Caco-2 (cell line): ENCODE measurements at regions of chr5 and their contacts with region 1.

Region 1: GRCh38 chr5:106940986-106941385 is 729.8 kb downstream of the EFNA5 start:
- DNase-seq: peak; percentile 69 to 77
- H3K4me3 ChIP-seq: no peak overlapping the region
- H3K4me3 Mint-ChIP-seq: peak overlapping the region; percentile 41
- H3K27ac Mint-ChIP-seq: peak overlapping the region; percentile 94
- H3K4me1 ChIP-seq: peaks cover 21% of the 10 kb centered on the region
- H3K4me1 Mint-ChIP-seq: peaks cover 18% of the 10 kb centered on the region
- H3K27me3 ChIP-seq: no peaks in the 10 kb centered on the region
- H3K27me3 Mint-ChIP-seq: no peaks in the 10 kb centered on the region
- CTCF ChIP-seq: no peak

Region 2: GRCh38 chr5:107002115-107002514 is 61.1 kb after region 1 on chr5:
- CTCF ChIA-PET with region 1: no interaction called
- POLR2A ChIA-PET with region 1: no interaction called
- intact Hi-C with region 1: no loop called
- DNase-seq: no peak
- H3K4me3 ChIP-seq: no peak overlapping the region
- H3K4me3 Mint-ChIP-seq: no peak overlapping the region
- H3K27ac Mint-ChIP-seq: no peak overlapping the region
- H3K4me1 ChIP-seq: no peaks in the 10 kb centered on the region
- H3K4me1 Mint-ChIP-seq: no peaks in the 10 kb centered on the region
- H3K27me3 ChIP-seq: no peaks in the 10 kb centered on the region
- H3K27me3 Mint-ChIP-seq: no peaks in the 10 kb centered on the region
- CTCF ChIP-seq: no peak

Region 3: GRCh38 chr5:107072967-107073366 is 132.0 kb after region 1 on chr5:
- CTCF ChIA-PET with region 1: no interaction called
- POLR2A ChIA-PET with region 1: no interaction called
- intact Hi-C with region 1: loop called (anchors 1 kb)
- DNase-seq: peak in 1 of 2 experiments; percentile 28
- H3K4me3 ChIP-seq: no peak overlapping the region
- H3K4me3 Mint-ChIP-seq: no peak overlapping the region
- H3K27ac Mint-ChIP-seq: no peak overlapping the region
- H3K4me1 ChIP-seq: peaks cover 7% of the 10 kb centered on the region; the same call in 1 of the 2 replicates
- H3K4me1 Mint-ChIP-seq: peaks cover 15% of the 10 kb centered on the region
- H3K27me3 ChIP-seq: no peaks in the 10 kb centered on the region
- H3K27me3 Mint-ChIP-seq: peaks cover 3% of the 10 kb centered on the region
- CTCF ChIP-seq: no peak